Vagina (tissue), 2 donors: ENCODE measurements at regions of chr12 and their contacts with region 1.

Region 1: DNA sequence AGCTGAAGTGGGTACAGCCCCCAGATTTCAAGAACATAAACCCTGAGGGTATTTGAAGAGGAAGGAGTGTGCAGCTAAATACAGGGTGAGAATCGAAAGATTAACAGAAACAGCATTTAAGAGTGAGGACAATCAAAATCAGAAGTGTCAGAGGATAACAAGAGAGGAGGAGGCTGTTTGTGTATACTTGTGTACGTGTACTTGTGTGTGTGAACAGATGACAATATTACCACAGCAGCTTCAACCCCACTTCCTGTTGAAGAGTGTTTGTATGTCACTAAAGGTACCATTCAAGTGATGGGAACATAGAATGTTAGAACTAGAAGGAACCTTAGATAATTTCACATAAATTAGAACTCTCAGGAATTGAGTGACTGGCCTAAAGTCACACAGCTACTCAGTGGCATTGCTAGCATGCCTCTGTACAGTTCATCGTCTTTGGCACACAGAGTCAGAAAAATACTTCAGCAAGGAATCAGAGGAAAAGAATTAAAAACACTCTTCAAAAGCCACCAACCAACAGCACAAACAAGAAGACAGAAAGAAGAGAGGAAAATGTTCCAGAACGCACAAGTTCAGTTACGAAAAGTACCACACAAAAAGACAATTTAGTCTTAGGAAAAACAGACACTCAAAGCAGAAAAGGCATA is 164.3 kb upstream of the BCL2L14 start:
- DNase-seq: no peak
- H3K4me3 ChIP-seq: no peak overlapping the region
- H3K27ac ChIP-seq: no peak overlapping the region
- H3K4me1 ChIP-seq: no peaks in the 10 kb centered on the region
- H3K27me3 ChIP-seq: no peaks in the 10 kb centered on the region
- CTCF ChIP-seq: no peak
- POLR2A ChIP-seq: no peak

Region 2: GRCh38 chr12:11853126-11853525 is 53.3 kb before region 1 on chr12:
- intact Hi-C with region 1: no loop called
- DNase-seq: no peak
- H3K4me3 ChIP-seq: no peak overlapping the region
- H3K27ac ChIP-seq: no peak overlapping the region
- H3K4me1 ChIP-seq: no peaks in the 10 kb centered on the region
- H3K27me3 ChIP-seq: no peaks in the 10 kb centered on the region
- CTCF ChIP-seq: no peak
- POLR2A ChIP-seq: no peak

Region 3: GRCh38 chr12:12024911-12025682 is 118.7 kb after region 1 on chr12:
- intact Hi-C with region 1: loop called (anchors 10 kb)
- DNase-seq: peak in 1 of 2 donors; percentile 62
- H3K4me3 ChIP-seq: no peak overlapping the region
- H3K27ac ChIP-seq: no peak overlapping the region
- H3K4me1 ChIP-seq: no peaks in the 10 kb centered on the region
- H3K27me3 ChIP-seq: no peaks in the 10 kb centered on the region
- CTCF ChIP-seq: no peak
- POLR2A ChIP-seq: no peak

Region 4: GRCh38 chr12:12491606-12492005 is 585.2 kb after region 1 on chr12:
- intact Hi-C with region 1: no loop called
- DNase-seq: no peak
- H3K4me3 ChIP-seq: no peak overlapping the region
- H3K27ac ChIP-seq: no peak overlapping the region
- H3K4me1 ChIP-seq: no peaks in the 10 kb centered on the region
- H3K27me3 ChIP-seq: no peaks in the 10 kb centered on the region
- CTCF ChIP-seq: no peak
- POLR2A ChIP-seq: no peak

Region 5: DNA sequence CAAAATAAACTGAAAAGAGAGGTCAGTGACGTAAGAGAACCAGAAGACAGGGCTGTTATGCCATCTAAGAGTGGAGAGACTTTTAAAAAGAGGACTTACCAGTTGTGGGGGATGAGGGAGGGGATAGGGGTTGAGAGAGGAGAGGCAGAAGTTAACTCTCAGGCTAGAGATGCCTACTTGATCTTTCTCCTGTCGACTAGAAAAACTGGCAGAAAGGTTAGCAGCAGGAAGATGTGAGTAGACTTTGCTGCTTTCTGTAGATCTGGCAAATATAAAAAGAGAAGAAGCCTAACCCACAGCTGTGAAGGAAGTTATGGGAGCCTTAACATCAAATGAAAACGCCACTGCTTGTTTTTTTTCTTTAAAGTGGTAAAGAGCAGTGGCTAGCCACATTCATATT is 716.0 kb after region 1 on chr12:
- intact Hi-C with region 1: loop called (anchors 5 kb)
- DNase-seq: no peak
- H3K4me3 ChIP-seq: no peak overlapping the region
- H3K27ac ChIP-seq: no peak overlapping the region
- H3K4me1 ChIP-seq: peaks cover 17% of the 10 kb centered on the region
- H3K27me3 ChIP-seq: no peaks in the 10 kb centered on the region
- CTCF ChIP-seq: no peak
- POLR2A ChIP-seq: no peak